Heart left ventricle (tissue), 16 donors: ENCODE measurements at regions of chr9 and their contacts with region 1.

Region 1: DNA sequence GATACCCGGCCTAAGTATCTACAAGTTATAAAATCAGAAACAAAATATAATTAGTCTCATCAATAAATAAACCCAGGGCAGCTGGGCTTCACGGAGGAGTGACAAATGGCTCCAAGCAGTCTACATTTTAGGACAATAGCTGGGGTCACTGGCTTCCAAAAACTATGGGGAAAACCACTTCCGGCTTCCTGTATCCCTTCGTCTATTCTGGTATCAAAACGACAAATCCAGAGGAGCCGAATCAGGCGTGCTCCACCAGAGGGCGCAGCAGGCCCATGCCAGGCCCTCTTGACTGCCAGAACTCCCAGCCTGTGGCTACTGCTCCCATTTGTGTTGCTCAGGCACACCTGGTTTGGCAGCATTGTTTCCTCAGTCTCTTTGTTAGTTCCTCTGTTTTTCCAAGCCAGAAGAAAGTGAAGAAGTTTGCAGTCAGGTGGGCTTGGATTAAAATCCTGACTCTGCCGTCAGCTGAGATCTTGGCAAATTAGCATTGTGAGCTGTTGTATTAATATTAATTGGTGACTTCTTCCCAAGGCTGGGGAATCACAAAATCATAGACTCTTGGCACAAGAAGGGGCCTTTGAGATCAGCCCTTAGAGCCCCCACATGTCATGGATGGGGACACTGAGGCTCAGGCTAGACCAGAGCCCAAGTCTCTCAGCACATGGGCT is 11.6 kb upstream of the RAB14 start:
- DNase-seq: peak; percentile 87 to 93 (median 88)
- ATAC-seq: peak; percentile 89 to 97 (median 94)
- H3K4me3 ChIP-seq: peak overlapping the region in 2 of 12 donors; percentile 18
- H3K27ac ChIP-seq: peak overlapping the region in 10 of 12 donors; percentile 15 to 83 (median 49)
- H3K4me1 ChIP-seq: peaks cover 0 to 18% (median 5%) of the 10 kb centered on the region in 12 donors
- H3K27me3 ChIP-seq: no peaks in the 10 kb centered on the region
- CTCF ChIP-seq: peak; percentile 90 to 99 (median 97)
- POLR2A ChIP-seq: no peak

Region 2: DNA sequence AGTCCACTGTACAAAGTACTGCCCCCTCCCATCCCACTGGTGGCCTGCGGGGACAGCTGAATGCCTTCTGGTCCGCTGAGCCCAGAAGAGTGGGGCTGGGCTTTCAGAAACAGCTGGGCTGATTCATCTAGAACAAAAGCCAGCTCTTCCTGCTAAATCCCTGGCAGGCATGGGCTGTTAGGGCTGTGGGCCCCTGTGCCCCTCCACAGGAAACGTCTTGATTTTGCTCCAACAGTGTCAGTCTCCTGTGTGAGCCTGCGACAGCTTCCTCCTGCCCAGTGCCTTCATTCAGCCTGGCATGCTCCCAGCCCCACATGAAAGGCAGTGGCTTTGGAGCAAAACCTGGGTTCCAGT is 47.8 kb after region 1 on chr9:
- intact Hi-C with region 1: loop called in 5 of 10 experiments (anchors 2 to 10 kb)
- DNase-seq: no peak
- ATAC-seq: peak in 3 of 4 donors; percentile 55 to 75 (median 64)
- H3K4me3 ChIP-seq: no peak overlapping the region
- H3K27ac ChIP-seq: peak overlapping the region in 1 of 12 donors; percentile 96
- H3K4me1 ChIP-seq: peaks cover 0 to 31% (median 8%) of the 10 kb centered on the region in 12 donors
- H3K27me3 ChIP-seq: no peaks in the 10 kb centered on the region
- CTCF ChIP-seq: no peak
- POLR2A ChIP-seq: no peak

Region 3: DNA sequence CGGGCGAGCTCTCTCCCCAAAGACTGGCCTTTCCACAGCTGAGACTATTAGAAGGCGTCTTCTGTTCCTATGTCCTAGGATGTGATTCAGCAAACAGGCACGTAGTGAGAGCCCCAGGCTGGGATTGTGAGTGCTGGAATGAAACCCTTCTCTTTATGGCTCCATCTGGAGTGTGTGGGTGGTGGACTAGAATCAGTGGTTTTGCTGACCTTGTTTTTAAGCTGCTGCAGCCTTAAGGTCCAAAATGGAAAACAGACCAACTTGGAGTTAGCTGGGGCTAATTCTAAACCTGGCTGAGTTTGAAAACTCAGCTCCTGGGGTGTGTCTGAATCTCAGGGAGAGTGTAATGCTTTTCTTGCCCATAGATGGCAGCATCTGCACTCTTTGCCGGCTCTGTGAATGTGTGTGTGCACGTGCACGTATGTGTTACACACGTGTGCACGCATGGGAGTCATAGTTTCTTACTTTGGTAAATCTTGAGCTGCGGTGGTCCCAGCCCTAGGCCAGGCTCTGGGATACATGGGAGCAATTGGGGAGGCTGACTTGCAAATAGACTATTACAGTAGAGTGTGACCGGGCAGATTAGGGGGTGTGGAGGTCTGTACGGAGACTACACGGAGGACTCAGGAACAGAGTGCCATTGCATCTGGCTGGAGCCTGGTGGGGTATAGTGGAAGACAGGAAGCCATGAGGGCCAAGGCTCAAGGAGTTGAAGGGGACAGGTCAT is 65.4 kb after region 1 on chr9:
- intact Hi-C with region 1: loop called in 2 of 10 experiments (anchors 5 kb)
- DNase-seq: peak; percentile 75 to 82 (median 76)
- ATAC-seq: peak; percentile 52 to 72 (median 64)
- H3K4me3 ChIP-seq: peak overlapping the region in 1 of 12 donors; percentile 7
- H3K27ac ChIP-seq: peak overlapping the region; percentile 0 to 100 (median 96)
- H3K4me1 ChIP-seq: peaks cover 31 to 96% (median 69%) of the 10 kb centered on the region in 12 donors
- H3K27me3 ChIP-seq: no peaks in the 10 kb centered on the region
- CTCF ChIP-seq: peak; percentile 73 to 93 (median 86)
- POLR2A ChIP-seq: peak in 1 of 2 donors; percentile 35

Region 4: DNA sequence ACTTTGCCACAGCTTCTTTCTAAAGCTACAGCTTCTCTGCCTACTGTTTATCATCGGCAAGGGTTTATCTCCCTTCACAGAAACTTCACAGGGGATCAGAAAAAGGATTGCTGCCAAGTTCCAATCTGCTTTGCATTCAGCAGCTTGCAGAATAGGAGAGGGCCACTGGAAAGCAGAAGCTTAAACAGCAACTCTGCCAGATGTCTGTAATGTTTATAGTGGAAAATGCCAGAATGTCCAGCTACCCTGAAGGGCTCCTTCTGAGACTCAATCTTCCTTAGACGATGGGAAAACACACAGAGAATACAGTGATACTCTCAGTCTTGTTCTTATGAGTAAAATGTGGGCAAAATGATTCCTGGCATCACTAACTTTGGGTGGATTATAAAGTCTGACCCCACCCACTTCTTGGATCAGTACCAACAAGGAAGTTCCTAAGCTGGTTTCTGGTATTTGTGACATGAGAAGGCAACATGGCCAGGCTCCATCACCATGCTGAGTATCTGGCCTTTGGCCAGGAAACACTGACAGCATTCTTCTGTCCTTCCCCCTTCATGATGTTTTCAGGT is 137.8 kb after region 1 on chr9:
- intact Hi-C with region 1: loop called in 1 of 10 experiments (anchors 1 kb)
- DNase-seq: peak in 4 of 5 donors; percentile 77 to 85 (median 80)
- ATAC-seq: peak; percentile 48 to 62 (median 58)
- H3K4me3 ChIP-seq: peak overlapping the region in 1 of 12 donors; percentile 5
- H3K27ac ChIP-seq: peak overlapping the region; percentile 35 to 97 (median 90)
- H3K4me1 ChIP-seq: peaks cover 19 to 94% (median 73%) of the 10 kb centered on the region in 12 donors
- H3K27me3 ChIP-seq: no peaks in the 10 kb centered on the region
- CTCF ChIP-seq: no peak
- POLR2A ChIP-seq: no peak

Region 5: DNA sequence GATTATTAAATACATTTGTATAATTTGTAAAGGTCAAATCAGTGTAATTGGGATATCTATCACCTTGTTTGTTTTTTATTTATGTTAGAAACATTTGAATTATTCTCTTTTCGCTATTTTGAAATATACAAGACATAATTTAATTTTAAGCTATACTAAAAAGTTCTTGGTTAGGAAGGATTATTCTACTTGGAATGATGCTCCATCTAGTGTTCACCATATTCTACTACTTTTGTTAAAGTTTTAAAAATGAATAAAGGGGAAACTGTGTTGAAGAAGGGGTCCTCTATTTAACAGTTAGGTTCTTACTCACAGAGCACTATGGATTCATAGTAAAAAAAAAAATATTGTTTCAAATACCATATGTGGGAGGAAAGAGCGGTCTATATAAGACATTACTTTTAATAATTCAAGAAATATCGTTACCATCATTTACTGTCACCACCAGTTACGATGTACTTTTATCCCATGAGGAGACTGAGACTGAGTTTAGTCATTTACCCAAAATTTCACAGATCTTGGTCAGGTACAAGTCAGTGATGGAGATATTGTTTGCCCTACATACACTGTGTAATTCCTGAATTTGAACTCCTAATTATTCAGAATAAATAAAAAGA is 163.1 kb after region 1 on chr9:
- intact Hi-C with region 1: loop called in 6 of 10 experiments (anchors 2 to 5 kb)
- DNase-seq: no peak
- ATAC-seq: no peak
- H3K4me3 ChIP-seq: no peak overlapping the region
- H3K27ac ChIP-seq: peak overlapping the region in 1 of 12 donors; percentile 4
- H3K4me1 ChIP-seq: peaks cover 4 to 43% (median 29%) of the 10 kb centered on the region in 12 donors
- H3K27me3 ChIP-seq: no peaks in the 10 kb centered on the region
- CTCF ChIP-seq: peak in 11 of 12 donors; percentile 39 to 79 (median 64)
- POLR2A ChIP-seq: no peak

Region 6: DNA sequence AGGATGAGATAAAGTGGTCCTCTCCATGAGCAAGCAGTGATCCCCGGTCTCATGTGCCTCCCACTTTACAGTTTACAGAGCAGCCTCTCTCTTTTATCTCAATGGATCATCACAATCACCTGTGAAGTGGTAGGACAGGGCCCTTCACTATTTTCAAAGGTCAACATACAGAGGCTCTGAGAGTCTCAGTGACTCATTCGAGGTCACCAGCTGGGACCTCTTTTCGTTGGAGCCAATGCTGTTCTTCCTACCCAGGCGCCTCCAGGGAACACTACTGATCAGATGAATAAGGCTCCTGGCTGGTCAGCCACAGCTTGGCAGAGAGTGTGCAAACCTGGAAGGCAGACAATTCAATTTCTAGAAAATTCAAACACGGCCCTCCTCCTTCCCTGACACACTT is 269.8 kb after region 1 on chr9:
- intact Hi-C with region 1: no loop called
- DNase-seq: no peak
- ATAC-seq: peak in 2 of 4 donors; percentile 20 to 55
- H3K4me3 ChIP-seq: no peak overlapping the region
- H3K27ac ChIP-seq: peak overlapping the region in 1 of 12 donors; percentile 15
- H3K4me1 ChIP-seq: peaks cover 0 to 78% (median 53%) of the 10 kb centered on the region in 12 donors
- H3K27me3 ChIP-seq: no peaks in the 10 kb centered on the region
- CTCF ChIP-seq: no peak
- POLR2A ChIP-seq: no peak